Pancreas (tissue), 10 donors: ENCODE measurements at regions of chr22 and their contacts with region 1.

Region 1: DNA sequence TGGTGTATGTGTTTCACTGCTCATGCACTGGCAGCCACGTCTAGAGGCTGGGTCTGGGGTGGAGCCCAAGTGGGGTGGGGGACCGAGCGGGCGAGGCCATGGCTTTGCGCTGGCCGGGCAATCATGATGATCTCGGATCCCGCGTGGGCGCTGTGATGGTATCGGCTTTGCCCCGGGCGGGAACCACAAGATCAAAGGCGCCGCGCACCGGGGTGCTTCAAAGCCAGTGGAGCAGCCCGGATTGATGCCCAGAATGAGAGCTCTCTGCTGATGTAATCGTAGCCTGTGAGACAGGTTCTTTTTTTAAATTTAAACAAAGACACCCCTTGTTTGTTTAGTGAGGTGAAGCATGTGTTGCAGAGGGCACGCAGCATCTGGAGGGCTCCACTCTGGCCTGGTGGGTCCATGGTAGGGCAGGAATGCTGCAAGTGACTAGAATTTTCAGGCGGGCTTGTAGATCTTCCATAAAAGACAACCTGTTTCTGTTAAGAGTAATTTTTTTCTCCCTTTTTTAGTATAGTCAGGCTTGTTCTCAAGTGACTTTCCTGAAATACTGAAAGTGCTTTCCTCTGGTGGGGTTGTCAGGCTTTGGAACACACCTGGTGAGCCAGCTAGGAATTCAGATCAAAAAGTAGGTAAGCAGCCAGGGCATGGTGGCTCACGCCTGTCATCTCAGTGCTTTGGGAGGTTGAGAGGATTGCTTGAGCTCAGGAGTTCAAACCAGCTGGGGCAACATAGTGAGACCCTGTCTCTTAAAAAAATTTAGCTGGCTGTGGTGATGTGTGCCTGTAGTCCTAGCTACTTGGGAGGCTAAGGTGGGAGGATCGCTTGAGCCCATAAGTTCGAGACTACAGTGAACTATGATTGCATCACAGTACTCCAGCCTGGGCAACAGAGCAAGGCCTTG is 40.7 kb downstream of the ZNRF3 start:
- DNase-seq: peak; percentile 71 to 87 (median 78)
- ATAC-seq: peak; percentile 77 to 87 (median 84)
- H3K4me3 ChIP-seq: peak overlapping the region in 1 of 4 donors; percentile 21
- H3K27ac ChIP-seq: peak overlapping the region in 3 of 4 donors; percentile 28 to 75 (median 65)
- H3K4me1 ChIP-seq: peaks cover 23 to 49% (median 31%) of the 10 kb centered on the region in 3 donors
- H3K27me3 ChIP-seq: no peaks in the 10 kb centered on the region
- CTCF ChIP-seq: no peak

Region 2: GRCh38 chr22:28882878-28883656 is 41.0 kb before region 1 on chr22 and contains the start of gene ZNRF3:
- intact Hi-C with region 1: no loop called
- DNase-seq: peak; percentile 90 to 99 (median 94)
- ATAC-seq: peak; percentile 90 to 98 (median 92)
- H3K4me3 ChIP-seq: peak within 1 kb of the TSS; percentile 33 to 59 (median 55)
- H3K27ac ChIP-seq: peak within 1 kb of the TSS in 2 of 4 donors; percentile 44 to 58
- H3K4me1 ChIP-seq: peaks cover 7 to 29% (median 23%) of the 10 kb centered on the region in 3 donors
- H3K27me3 ChIP-seq: no peaks in the 10 kb centered on the region
- CTCF ChIP-seq: no peak
- total RNA-seq, gene ZNRF3: 3.0 to 6.8 (median 4.9) TPM

Region 3: DNA sequence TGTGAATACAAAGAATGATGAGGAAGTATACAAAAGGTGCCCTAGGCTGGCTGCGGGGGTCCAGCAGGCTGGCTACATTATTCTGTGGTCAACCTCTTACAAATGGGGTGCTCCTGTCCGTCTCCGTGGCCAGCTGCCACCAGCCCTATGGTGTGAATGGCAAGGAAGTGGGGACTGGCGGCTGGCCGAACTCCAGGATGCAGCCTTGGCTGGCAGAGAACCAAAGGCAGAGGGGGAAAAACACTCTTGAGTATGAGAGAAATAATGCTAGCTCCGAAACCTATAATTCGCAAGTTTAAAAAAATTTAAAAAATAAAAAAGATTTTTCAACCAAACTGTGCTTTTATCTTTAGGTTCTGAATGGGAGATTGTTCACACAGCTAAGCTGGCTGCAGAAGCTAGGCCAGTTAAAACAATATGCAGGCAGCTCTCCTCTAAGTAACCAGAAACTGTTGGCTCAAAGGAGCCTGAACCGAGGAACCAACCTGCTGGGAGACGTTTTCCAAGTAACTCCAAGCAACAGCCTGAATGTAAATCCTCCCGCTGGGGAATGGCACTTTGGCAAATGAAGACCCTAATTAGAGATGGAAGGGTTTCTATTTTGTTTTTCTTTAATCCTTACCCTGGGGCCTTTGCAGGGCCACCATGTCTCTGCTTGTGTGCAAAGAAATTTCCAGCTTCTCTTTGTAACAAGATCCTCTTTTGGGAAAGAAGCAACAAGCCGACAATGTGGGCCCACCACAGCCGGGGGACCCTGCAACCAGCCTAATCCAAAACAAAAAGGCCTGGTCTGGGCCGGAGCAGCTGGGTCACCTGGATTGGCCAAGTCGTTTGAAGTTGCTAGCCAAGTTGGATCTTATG is 87.4 kb after region 1 on chr22:
- intact Hi-C with region 1: no loop called
- DNase-seq: peak in 2 of 6 donors; percentile 34 to 50
- ATAC-seq: peak in 3 of 4 donors; percentile 38 to 65 (median 41)
- H3K4me3 ChIP-seq: no peak overlapping the region
- H3K27ac ChIP-seq: no peak overlapping the region
- H3K4me1 ChIP-seq: peaks cover 0 to 7% (median 4%) of the 10 kb centered on the region in 3 donors
- H3K27me3 ChIP-seq: no peaks in the 10 kb centered on the region
- CTCF ChIP-seq: no peak

Region 4: DNA sequence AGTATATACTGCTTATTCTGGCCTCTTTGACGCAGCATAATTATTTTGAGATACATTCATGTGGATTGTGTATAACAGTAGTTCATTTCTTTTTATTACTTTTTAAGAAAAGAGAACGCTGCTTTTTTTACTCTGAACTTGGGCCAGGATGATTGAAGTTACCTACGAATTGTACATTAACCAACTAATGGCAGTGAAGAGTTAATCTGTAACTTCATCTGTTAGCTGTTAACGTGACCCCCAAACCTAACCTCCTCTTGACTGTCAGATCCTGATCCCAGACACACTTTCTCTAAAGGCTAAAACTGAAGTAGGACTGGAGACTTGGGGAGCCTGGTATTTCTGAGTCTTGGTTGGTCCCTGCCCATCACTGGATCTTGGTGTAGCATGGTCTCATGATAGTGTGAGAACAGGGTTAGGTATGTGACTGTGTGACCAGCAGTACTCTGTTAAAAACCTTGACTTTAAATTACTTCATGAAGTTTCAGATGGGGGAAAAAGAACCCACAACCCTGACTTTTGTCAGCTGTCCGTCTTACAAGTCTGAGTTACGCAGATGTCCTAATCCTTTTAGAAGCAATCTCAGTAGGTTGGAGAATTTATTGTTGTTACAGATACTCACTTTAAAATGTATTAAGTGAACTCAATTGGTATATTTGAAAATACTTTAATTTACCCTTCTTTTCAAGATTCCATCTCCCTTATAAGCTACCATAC is 98.2 kb after region 1 on chr22:
- intact Hi-C with region 1: loop called in 1 of 3 experiments (anchors 10 kb)
- DNase-seq: no peak
- ATAC-seq: peak in 3 of 4 donors; percentile 30 to 74 (median 66)
- H3K4me3 ChIP-seq: no peak overlapping the region
- H3K27ac ChIP-seq: peak overlapping the region in 2 of 4 donors; percentile 30 to 39
- H3K4me1 ChIP-seq: peaks cover 0 to 29% (median 13%) of the 10 kb centered on the region in 3 donors
- H3K27me3 ChIP-seq: no peaks in the 10 kb centered on the region
- CTCF ChIP-seq: no peak